ENCODE measurements at regions of chr1 and their contacts with region 1.

Region 1: GRCh38 chr1:27603681-27604578 is at the start of gene AHDC1:
- DNase-seq: peak; percentile 90 to 94 (median 91)
- H3K4me3 ChIP-seq: peak within 1 kb of the TSS; percentile 29 to 79
- H3K4me3 Mint-ChIP-seq: peak within 1 kb of the TSS; percentile 86 to 98 (median 92)
- H3K27ac ChIP-seq: peak within 1 kb of the TSS; percentile 63
- H3K27ac Mint-ChIP-seq: peak within 1 kb of the TSS; percentile 88 to 94 (median 92)
- H3K4me1 ChIP-seq: peaks cover 54% of the 10 kb centered on the region
- H3K4me1 Mint-ChIP-seq: peaks cover 16 to 66% (median 40%) of the 10 kb centered on the region in 4 donors
- H3K27me3 ChIP-seq: no peaks in the 10 kb centered on the region
- H3K27me3 Mint-ChIP-seq: no peaks in the 10 kb centered on the region
- total RNA-seq, gene AHDC1: 18.4 to 19.2 TPM

Region 2: DNA sequence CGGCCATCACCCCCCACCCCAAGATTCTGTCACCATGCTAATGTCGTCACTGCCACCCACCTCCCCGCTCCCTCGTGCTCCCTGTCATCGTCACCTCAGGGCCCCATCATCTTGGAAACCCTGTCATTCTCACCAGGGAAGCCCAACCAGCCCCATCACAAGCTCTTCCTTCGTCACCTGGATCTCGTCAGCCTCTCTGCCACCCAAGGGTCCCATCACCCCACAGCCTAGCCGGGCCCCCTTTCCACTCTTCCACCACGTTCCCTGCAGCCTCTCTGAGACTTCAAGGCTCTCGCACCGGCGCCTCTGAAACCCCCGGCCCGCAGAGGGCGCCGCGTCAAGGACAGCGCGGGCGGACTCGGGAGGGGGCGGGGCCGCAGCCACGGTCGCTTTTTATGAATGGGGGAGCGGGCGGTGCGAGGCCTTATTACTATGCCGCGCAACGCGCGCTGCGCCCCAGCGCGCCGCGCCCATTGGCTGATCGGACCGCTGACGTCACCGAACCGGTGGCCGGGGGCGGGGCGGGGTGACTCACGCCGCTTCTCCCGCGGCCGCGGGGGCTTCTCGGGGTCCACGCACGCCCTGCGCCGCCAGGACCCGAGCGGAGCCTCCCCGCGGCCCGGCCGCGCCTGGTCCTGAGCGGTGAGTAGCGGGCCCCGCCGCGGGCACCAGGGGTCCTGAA is 211.7 kb before region 1 on chr1 and contains the start of gene GPR3:
- CTCF ChIA-PET with region 1: interaction called, 75 read pairs
- POLR2A ChIA-PET with region 1: interaction called, 3 read pairs
- intact Hi-C with region 1: loop called (anchors 1 kb)
- DNase-seq: peak; percentile 88 to 92 (median 89)
- H3K4me3 ChIP-seq: peak within 1 kb of the TSS; percentile 17 to 68
- H3K4me3 Mint-ChIP-seq: peak within 1 kb of the TSS; percentile 79 to 93 (median 84)
- H3K27ac ChIP-seq: peak within 1 kb of the TSS; percentile 42
- H3K27ac Mint-ChIP-seq: peak within 1 kb of the TSS; percentile 58 to 97 (median 94)
- H3K4me1 ChIP-seq: peaks cover 26% of the 10 kb centered on the region
- H3K4me1 Mint-ChIP-seq: peaks cover 11 to 30% (median 17%) of the 10 kb centered on the region in 4 donors
- H3K27me3 ChIP-seq: no peaks in the 10 kb centered on the region
- H3K27me3 Mint-ChIP-seq: peaks cover 1 to 4% of the 10 kb centered on the region in 2 donors
- total RNA-seq, gene GPR3: not detected

Region 3: GRCh38 chr1:27416387-27417111 is 187.4 kb before region 1 on chr1:
- CTCF ChIA-PET with region 1: interaction called, 17 read pairs
- POLR2A ChIA-PET with region 1: interaction called, 3 read pairs
- intact Hi-C with region 1: loop called (anchors 2 kb)
- DNase-seq: peak; percentile 51 to 67 (median 60)
- H3K4me3 ChIP-seq: no peak overlapping the region
- H3K4me3 Mint-ChIP-seq: no peak overlapping the region
- H3K27ac ChIP-seq: no peak overlapping the region
- H3K27ac Mint-ChIP-seq: peak overlapping the region; percentile 29 to 75 (median 42)
- H3K4me1 ChIP-seq: peaks cover 42% of the 10 kb centered on the region
- H3K4me1 Mint-ChIP-seq: peaks cover 19 to 42% (median 30%) of the 10 kb centered on the region in 4 donors
- H3K27me3 ChIP-seq: no peaks in the 10 kb centered on the region
- H3K27me3 Mint-ChIP-seq: no peaks in the 10 kb centered on the region

Region 4: DNA sequence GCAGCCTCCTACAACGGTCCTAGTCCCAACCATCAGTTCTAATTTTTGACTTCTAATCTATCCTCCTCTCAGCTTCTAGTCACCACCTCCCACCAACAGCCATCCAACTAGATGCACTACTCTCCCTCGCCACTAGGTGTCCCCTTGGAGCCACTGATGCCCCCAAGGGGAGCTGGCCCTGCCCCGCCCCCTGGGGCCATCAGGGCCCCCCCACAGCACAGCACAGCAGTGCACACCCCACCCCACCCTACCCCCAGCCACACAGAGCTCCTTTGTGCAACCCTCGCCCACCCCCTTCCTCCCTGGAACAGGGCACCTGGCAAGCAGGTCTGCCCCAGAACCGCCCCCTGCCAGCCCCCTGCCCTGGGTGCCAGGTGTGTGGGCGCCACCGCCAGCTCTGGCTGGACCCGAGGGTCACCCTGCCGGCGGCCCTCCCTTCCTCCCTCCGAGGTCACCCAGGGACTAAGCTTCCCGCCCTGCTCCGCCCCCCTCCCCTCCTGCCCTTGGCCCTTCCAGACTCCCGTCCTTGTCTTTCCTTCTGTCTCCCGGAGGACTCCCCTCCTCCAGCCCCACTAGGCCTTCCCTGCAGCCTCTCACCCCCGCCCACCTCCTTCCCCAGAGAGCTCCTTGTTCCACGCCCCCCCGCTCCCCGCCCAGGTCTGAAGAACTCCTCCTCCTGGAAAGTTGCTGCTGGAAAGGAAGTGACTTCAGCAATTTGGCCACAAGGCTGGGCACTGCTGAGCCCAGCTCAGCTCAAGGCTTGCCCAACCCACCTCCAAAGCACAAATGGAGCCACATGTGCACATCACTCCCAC is 46.9 kb before region 1 on chr1:
- CTCF ChIA-PET with region 1: interaction called, 96 read pairs
- POLR2A ChIA-PET with region 1: interaction called, 12 read pairs
- intact Hi-C with region 1: loop called (anchors 1 kb)
- DNase-seq: peak; percentile 65 to 70 (median 69)
- H3K4me3 ChIP-seq: no peak overlapping the region
- H3K4me3 Mint-ChIP-seq: peak overlapping the region; percentile 18 to 78 (median 45)
- H3K27ac ChIP-seq: no peak overlapping the region
- H3K27ac Mint-ChIP-seq: peak overlapping the region in 5 of 7 donors; percentile 49 to 77 (median 59)
- H3K4me1 ChIP-seq: peaks cover 17% of the 10 kb centered on the region
- H3K4me1 Mint-ChIP-seq: peaks cover 18 to 44% (median 28%) of the 10 kb centered on the region in 4 donors
- H3K27me3 ChIP-seq: no peaks in the 10 kb centered on the region
- H3K27me3 Mint-ChIP-seq: no peaks in the 10 kb centered on the region

Region 5: DNA sequence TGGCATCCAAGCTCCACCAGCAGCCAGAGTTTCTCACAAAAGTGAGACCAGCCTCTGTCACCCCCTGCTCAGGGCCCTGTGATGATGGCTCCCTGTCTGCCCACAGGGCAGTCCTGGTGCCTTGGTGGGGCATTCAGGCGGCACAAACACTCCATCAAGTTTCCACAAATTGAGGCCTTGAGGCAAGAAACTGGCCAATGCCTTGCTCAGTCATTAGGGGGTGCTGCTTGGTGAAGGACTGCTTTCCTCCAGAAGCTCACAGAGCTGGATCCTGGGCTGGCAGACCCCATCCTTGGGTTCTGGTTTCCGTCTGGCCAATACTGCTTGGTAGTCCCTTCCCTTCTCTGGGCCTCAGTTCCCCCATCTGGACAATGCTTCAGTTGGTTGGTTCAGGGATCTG is 12.5 kb after region 1 on chr1:
- CTCF ChIA-PET with region 1: interaction called, 38 read pairs
- POLR2A ChIA-PET with region 1: interaction called, 14 read pairs
- intact Hi-C with region 1: no loop called
- DNase-seq: no peak
- H3K4me3 ChIP-seq: no peak overlapping the region
- H3K4me3 Mint-ChIP-seq: peak overlapping the region in 1 of 8 donors; percentile 38
- H3K27ac ChIP-seq: no peak overlapping the region
- H3K27ac Mint-ChIP-seq: peak overlapping the region; percentile 52 to 94 (median 85)
- H3K4me1 ChIP-seq: peaks cover 49% of the 10 kb centered on the region
- H3K4me1 Mint-ChIP-seq: peaks cover 45 to 77% (median 57%) of the 10 kb centered on the region in 4 donors
- H3K27me3 ChIP-seq: no peaks in the 10 kb centered on the region
- H3K27me3 Mint-ChIP-seq: no peaks in the 10 kb centered on the region

Region 6: DNA sequence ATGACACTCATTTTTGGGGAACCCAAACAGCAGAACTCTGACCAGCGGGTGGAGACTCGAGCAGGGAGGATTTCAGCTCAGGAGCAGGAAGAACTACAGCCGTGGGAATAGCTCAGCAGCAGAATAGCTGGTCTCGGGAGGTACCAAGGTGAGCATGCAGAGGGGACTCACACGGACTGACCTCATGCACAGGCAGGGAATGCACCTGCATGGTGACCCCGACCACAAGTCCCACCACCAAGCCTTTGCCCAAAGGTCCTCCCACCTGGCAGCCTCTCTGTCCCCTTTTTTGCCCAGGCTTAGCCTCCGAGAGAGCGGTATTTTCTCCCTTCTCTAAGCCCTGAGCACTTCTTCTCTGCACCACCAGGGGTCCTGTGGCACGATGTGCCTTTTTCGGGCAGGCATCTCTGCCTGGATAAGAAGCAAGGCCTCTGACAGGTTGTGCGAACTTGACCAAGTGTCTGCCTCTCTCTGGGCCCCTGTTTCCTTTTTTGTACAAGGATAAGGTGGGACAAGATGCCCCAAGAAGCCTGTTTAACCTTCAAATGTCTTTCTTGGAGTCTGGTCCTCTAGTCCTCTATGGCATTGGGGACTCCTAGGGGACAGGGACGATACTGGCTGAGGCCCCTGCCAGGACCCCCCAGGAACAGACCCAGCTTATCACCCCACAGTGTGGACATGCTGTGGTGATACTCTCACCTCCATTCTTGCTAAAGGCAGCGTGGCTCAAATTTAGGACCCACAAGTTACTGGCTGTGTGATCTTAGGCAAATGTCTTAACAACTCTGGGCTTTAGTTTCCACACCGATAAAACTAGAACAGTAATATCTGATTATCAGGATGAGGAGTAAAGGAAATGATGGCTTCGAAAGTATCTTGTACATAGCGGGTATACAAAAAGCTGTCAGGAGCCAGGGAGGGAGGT is 40.0 kb after region 1 on chr1:
- CTCF ChIA-PET with region 1: interaction called, 26 read pairs
- POLR2A ChIA-PET with region 1: interaction called, 8 read pairs
- intact Hi-C with region 1: loop called (anchors 1 kb)
- DNase-seq: peak; percentile 67 to 74 (median 71)
- H3K4me3 ChIP-seq: no peak overlapping the region
- H3K4me3 Mint-ChIP-seq: peak overlapping the region in 1 of 8 donors; percentile 64
- H3K27ac ChIP-seq: no peak overlapping the region
- H3K27ac Mint-ChIP-seq: peak overlapping the region in 6 of 7 donors; percentile 47 to 90 (median 72)
- H3K4me1 ChIP-seq: peaks cover 12% of the 10 kb centered on the region
- H3K4me1 Mint-ChIP-seq: peaks cover 10 to 22% (median 18%) of the 10 kb centered on the region in 4 donors
- H3K27me3 ChIP-seq: no peaks in the 10 kb centered on the region
- H3K27me3 Mint-ChIP-seq: no peaks in the 10 kb centered on the region

Measured in CD4-positive, alpha-beta memory T cell (primary cell).